ENCODE measurements at regions of chrX and their contacts with region 1.

Region 1: GRCh38 chrX:115940888-115941332 is 229.6 kb upstream of the AGTR2 start:
- DNase-seq: peak in 1 of 2 donors; percentile 90
- H3K4me3 ChIP-seq: peak overlapping the region in 1 of 2 donors; percentile 44
- H3K27ac ChIP-seq: no peak overlapping the region
- H3K4me1 ChIP-seq: no peaks in the 10 kb centered on the region
- H3K27me3 ChIP-seq: no peaks in the 10 kb centered on the region
- CTCF ChIP-seq: peak; percentile 57 to 65 (median 60)

Region 2: DNA sequence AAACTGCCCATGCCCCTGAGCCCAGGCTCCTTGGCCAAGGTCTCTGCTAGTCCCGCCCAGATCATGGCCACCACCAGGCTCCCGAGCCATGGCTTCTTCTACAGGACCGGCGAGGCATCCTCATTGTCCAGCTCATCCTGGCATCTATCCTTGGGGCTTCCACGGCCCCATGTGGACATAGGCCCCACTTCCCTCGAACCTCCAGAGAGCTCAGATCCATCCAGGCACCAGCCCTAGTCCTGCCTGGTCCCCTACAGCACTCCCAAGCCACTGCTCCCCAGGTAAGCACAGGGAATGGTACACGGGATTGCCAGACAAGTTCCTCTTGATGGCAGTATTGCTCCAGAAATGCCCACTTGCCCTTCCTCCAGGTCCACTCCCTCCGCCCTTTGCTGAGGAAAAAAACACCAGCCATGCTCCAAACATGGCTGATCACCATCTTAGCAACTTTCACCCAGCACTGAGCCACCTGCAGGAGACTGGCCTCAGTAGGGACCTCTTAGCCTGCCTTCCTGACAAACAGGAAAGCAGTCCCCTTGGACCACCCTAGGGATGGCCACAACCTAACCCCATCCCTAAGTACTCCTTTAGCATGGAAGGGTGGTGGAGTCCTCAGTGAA is 42.4 kb before region 1 on chrX:
- intact Hi-C with region 1: loop called (anchors 2 kb)
- DNase-seq: peak in 1 of 2 donors; percentile 84
- H3K4me3 ChIP-seq: no peak overlapping the region
- H3K27ac ChIP-seq: no peak overlapping the region
- H3K4me1 ChIP-seq: peaks cover 0 to 1% of the 10 kb centered on the region in 2 donors
- H3K27me3 ChIP-seq: no peaks in the 10 kb centered on the region
- CTCF ChIP-seq: peak in 2 of 3 experiments; percentile 23 to 43

Region 3: DNA sequence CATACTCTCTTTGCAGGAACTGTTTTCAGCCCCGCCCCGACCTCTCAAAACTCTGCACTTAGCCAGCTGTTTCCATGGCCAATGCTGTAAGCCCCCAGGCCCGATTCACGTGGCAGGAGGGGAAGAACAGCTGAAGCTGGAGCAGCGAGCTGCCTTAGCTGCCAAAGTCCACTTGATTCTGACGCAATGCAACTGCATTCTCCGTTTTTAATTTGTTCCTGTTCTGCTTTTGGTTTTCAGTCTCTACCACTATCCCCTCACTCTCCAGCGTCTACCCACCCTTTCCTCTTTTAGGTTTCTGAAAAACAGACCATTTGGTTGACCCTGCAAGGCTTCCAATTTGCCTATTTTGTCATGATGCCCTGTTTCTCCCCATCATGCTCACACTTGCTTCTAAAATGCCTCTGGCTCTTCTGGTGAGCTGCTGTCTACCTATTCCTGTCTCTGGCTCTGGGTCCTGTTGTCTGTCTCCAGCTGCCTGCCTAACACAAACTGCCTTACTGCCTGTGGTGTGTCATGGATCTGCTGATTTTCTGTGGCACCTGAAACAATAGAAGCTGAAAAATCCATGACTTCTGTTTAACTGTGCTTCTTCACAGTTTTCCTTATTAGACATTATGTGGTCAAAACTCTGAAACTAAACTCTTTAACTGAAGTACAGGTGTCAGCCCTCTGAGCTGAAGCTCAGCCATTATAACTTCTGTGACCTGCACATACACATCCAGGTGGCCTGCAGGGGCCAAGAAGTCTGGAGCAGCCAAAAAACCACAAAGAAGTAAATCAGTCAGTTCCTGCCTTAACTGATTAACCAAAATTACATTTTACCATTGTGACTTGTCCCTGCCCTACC is 69.2 kb after region 1 on chrX:
- intact Hi-C with region 1: no loop called
- DNase-seq: no peak
- H3K4me3 ChIP-seq: no peak overlapping the region
- H3K27ac ChIP-seq: no peak overlapping the region
- H3K4me1 ChIP-seq: no peaks in the 10 kb centered on the region
- H3K27me3 ChIP-seq: no peaks in the 10 kb centered on the region
- CTCF ChIP-seq: no peak

Region 4: GRCh38 chrX:116306218-116306617 is 365.3 kb after region 1 on chrX:
- intact Hi-C with region 1: no loop called
- DNase-seq: no peak
- H3K4me3 ChIP-seq: no peak overlapping the region
- H3K27ac ChIP-seq: no peak overlapping the region
- H3K4me1 ChIP-seq: no peaks in the 10 kb centered on the region
- H3K27me3 ChIP-seq: no peaks in the 10 kb centered on the region
- CTCF ChIP-seq: no peak